Activated CD4-positive, alpha-beta memory T cell treated with anti-CD3 and anti-CD28 coated beads, Interleukin-2, amount 10 ng/mL, durations not matched to agents 7 days and 5 days (primary cell): ENCODE measurements at regions of chr14 and their contacts with region 1.

Region 1: GRCh38 chr14:101823511-101824120 is 62.1 kb downstream of the PPP2R5C start:
- DNase-seq: peak; percentile 77
- H3K4me3 Mint-ChIP-seq: peak overlapping the region; percentile 84
- H3K27ac Mint-ChIP-seq: peak overlapping the region; percentile 98
- H3K4me1 Mint-ChIP-seq: peaks cover 79% of the 10 kb centered on the region
- H3K27me3 Mint-ChIP-seq: no peaks in the 10 kb centered on the region

Region 2: DNA sequence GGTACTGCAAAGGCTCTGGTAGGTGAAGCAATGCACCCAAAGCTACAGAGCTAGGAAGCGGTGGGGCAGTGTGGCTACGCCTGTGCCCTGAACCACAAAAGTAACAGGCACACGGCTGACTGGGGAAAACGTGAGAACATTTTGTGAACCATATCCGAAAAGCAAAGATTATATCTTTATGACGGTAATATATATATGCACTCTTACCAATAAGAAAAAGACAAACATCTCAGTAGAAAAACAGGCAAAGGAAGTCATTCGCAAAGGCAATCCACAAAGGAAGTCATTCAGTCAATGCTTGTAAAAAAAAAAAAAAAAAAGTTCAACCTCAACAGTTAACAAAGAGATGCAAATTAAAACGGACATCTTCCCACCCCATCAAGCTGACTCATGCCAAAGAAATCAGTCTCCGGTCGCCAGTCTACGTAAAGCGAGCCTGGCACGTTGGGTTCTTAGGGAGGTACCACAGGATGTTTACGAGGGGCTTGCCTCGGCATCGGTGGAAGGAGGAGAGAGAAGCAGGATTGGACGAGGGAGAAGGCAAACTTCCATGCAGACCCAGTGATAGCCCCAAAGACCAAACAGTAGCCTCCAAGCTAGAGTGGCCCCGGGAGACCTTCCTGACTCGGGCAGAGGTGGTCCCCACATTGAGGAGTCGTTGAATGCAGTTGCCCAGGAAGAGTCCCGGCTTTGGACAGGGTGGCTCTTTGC is 101.5 kb before region 1 on chr14:
- CTCF ChIA-PET with region 1: interaction called, 6 read pairs
- POLR2A ChIA-PET with region 1: interaction called, 20 read pairs
- DNase-seq: peak; percentile 89
- H3K4me3 Mint-ChIP-seq: peak overlapping the region; percentile 74
- H3K27ac Mint-ChIP-seq: peak overlapping the region; percentile 100
- H3K4me1 Mint-ChIP-seq: peaks cover 44% of the 10 kb centered on the region
- H3K27me3 Mint-ChIP-seq: no peaks in the 10 kb centered on the region

Region 3: GRCh38 chr14:101761032-101761880 is 62.4 kb before region 1 on chr14 and contains the start of gene PPP2R5C:
- CTCF ChIA-PET with region 1: interaction called, 6 read pairs
- POLR2A ChIA-PET with region 1: interaction called, 18 read pairs
- DNase-seq: peak; percentile 88
- H3K4me3 Mint-ChIP-seq: peak within 1 kb of the TSS; percentile 83
- H3K27ac Mint-ChIP-seq: peak within 1 kb of the TSS; percentile 73
- H3K4me1 Mint-ChIP-seq: peaks cover 39% of the 10 kb centered on the region
- H3K27me3 Mint-ChIP-seq: peaks cover 12% of the 10 kb centered on the region
- total RNA-seq, gene PPP2R5C: 338 to 348 TPM

Region 4: GRCh38 chr14:101774006-101774795 is 49.4 kb before region 1 on chr14:
- CTCF ChIA-PET with region 1: interaction called, 37 read pairs
- POLR2A ChIA-PET with region 1: interaction called, 17 read pairs
- DNase-seq: no peak
- H3K4me3 Mint-ChIP-seq: no peak overlapping the region
- H3K27ac Mint-ChIP-seq: no peak overlapping the region
- H3K4me1 Mint-ChIP-seq: peaks cover 10% of the 10 kb centered on the region
- H3K27me3 Mint-ChIP-seq: peaks cover 3% of the 10 kb centered on the region

Region 5: DNA sequence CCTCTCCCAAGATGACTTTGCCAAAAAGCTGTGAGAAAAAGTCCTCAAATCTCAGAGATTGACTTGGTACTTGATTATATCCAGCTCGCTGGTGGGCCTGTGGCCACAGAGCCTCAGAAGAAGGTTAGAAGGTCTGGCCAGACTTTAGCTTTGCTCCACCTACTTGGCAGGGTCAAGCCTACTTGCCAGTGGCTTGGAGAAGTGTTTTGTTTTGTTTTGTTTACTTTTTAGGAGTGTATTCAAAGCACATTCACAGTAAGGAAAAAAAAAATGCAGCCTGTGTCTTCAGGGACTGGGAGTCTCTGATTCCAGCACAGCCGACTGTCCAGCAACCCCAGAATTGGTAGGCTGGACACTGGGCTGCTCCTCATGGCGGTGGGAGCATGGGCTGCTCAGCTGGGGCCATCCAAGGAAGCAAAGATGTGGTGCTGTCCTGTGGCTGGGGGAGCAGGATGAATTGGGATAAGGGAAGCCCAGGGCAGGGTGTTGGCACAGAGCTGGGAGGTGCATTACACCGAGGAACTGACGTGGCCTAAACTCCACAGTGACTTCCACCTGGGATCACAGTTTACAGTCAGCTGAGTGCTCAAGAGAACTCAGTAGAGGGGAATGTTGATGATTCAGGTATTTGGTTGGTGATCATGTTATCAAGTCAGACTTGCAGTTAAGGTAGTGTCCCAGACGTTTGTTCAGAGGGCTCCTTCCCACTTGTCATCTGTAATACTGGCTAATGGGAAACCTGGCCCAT is 11.4 kb after region 1 on chr14:
- CTCF ChIA-PET with region 1: interaction called, 23 read pairs
- POLR2A ChIA-PET with region 1: interaction called, 87 read pairs
- DNase-seq: no peak
- H3K4me3 Mint-ChIP-seq: no peak overlapping the region
- H3K27ac Mint-ChIP-seq: no peak overlapping the region
- H3K4me1 Mint-ChIP-seq: peaks cover 78% of the 10 kb centered on the region
- H3K27me3 Mint-ChIP-seq: no peaks in the 10 kb centered on the region

Region 6: GRCh38 chr14:101876555-101876938 is 52.9 kb after region 1 on chr14:
- CTCF ChIA-PET with region 1: no interaction called
- POLR2A ChIA-PET with region 1: interaction called, 19 read pairs
- DNase-seq: peak; percentile 73
- H3K4me3 Mint-ChIP-seq: peak overlapping the region; percentile 44
- H3K27ac Mint-ChIP-seq: peak overlapping the region; percentile 61
- H3K4me1 Mint-ChIP-seq: peaks cover 69% of the 10 kb centered on the region
- H3K27me3 Mint-ChIP-seq: no peaks in the 10 kb centered on the region

Region 7: GRCh38 chr14:101964297-101965144 is 140.9 kb after region 1 on chr14 and contains the start of gene DYNC1H1:
- CTCF ChIA-PET with region 1: no interaction called
- POLR2A ChIA-PET with region 1: interaction called, 24 read pairs
- DNase-seq: peak; percentile 92
- H3K4me3 Mint-ChIP-seq: peak within 1 kb of the TSS; percentile 92
- H3K27ac Mint-ChIP-seq: peak within 1 kb of the TSS; percentile 89
- H3K4me1 Mint-ChIP-seq: peaks cover 43% of the 10 kb centered on the region
- H3K27me3 Mint-ChIP-seq: peaks cover 4% of the 10 kb centered on the region
- total RNA-seq, gene DYNC1H1: 223 to 241 TPM